WTC11 (cell line): ENCODE measurements at regions of chr1 and their contacts with region 1.

Region 1: GRCh38 chr1:151340870-151341754 is 5.9 kb downstream of the RFX5 start:
- DNase-seq: peak; percentile 47
- ATAC-seq: peak; percentile 88
- H3K4me3 Mint-ChIP-seq: no peak overlapping the region
- H3K27ac Mint-ChIP-seq: peak overlapping the region; percentile 58
- H3K4me1 Mint-ChIP-seq: peaks cover 5% of the 10 kb centered on the region
- H3K27me3 Mint-ChIP-seq: no peaks in the 10 kb centered on the region
- CTCF ChIP-seq: peak; percentile 50; the same call in 1 of the 2 replicates

Region 2: DNA sequence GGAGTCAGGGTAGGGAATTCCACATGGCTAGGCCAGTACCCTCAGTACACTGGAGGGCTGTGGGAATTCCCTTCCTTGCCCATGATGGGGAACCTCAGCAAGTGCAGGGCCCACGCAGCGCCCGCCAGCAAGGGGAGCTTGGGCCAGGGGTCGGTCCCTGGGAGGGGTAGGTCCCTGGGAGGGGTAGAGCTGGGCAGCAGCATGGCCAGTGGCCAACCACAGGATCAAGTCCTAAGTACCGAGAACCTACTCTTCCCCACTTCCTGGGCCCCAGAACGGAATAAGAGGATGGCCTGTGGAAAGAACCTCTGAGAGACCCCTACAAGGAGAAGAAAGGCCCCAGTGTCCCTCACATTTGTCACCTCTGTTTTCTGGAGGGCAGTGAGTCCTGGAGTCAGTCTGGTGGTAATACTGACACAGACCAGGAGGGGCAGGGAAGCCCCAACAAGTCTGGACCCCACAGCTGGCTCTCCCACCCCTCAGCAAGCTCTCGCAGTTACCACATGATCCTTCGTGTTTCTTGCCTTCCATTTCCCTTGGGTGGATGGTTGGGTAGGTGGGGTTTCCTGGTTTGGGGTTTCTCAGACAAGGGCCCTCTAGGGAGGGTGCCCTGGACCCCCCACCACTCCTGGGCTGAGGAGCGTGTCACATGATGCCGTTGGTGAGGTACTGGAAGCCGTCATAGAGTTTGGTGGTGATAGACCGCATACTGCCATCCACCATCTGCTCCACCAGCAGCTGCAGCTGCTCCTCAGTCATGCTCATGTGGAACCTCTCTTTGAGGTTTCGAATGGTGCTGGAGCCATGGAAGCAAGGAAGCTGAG is 48.7 kb before region 1 on chr1:
- CTCF ChIA-PET with region 1: interaction called, 36 read pairs
- POLR2A ChIA-PET with region 1: no interaction called
- DNase-seq: no peak
- ATAC-seq: peak; percentile 43
- H3K4me3 Mint-ChIP-seq: no peak overlapping the region
- H3K27ac Mint-ChIP-seq: no peak overlapping the region; the same call in 1 of the 2 replicates
- H3K4me1 Mint-ChIP-seq: peaks cover 30% of the 10 kb centered on the region
- H3K27me3 Mint-ChIP-seq: no peaks in the 10 kb centered on the region
- CTCF ChIP-seq: no peak

Region 3: GRCh38 chr1:151327223-151327902 is 13.7 kb before region 1 on chr1 and contains the start of gene PI4KB:
- CTCF ChIA-PET with region 1: interaction called, 48 read pairs
- POLR2A ChIA-PET with region 1: interaction called, 12 read pairs
- DNase-seq: peak; percentile 92
- ATAC-seq: peak; percentile 96
- H3K4me3 Mint-ChIP-seq: peak within 1 kb of the TSS; percentile 87
- H3K27ac Mint-ChIP-seq: peak within 1 kb of the TSS; percentile 98
- H3K4me1 Mint-ChIP-seq: peaks cover 13% of the 10 kb centered on the region
- H3K27me3 Mint-ChIP-seq: no peaks in the 10 kb centered on the region
- CTCF ChIP-seq: no peak
- total RNA-seq, gene PI4KB: 25.6 to 33.6 TPM (median 30.5 TPM) in 3 replicates

Region 4: DNA sequence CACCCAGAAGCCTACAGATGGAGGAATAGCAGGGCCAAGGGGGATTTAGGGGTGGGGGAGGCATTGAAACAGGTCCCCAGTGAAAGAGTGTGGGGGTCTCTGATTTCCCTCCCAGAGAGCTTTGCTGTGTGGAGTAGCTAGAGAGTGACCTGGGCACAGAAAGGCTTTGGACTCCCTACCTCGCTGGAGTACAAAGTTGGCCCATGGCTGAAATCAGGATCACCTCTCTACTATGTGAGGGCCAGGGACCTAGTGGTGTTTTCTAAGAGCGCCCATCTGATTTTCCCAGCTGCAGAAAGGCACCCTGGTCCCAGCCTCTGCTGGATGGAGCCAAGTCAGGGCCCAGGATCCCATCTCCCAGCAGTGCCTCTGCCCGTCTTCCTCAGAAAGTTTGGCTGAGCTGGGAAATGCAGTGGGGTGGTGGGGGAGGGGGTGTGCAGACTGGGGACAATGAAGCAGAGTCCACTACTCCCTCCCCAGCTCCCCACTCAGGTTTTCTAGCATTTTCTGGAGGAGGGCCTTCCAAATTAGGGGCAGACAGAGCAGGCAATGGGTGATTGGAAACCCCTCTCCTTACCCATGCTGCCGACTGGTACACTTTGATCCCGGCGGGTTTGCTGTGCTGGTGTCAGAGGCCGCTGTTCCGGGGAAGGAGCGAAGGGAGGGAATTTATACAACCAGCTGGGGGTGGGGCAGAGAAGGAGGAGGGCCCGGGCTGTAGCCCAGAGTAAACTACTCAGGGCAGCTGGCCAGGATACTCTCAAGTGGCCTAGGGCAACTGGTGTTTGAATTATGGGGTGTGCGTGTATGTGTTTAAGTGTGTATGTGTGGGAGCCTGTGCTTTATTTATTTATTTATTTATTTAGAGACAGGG is 31.2 kb after region 1 on chr1 and contains the start of gene SELENBP1:
- CTCF ChIA-PET with region 1: interaction called, 15 read pairs
- POLR2A ChIA-PET with region 1: no interaction called
- DNase-seq: peak; percentile 63
- ATAC-seq: peak; percentile 86
- H3K4me3 Mint-ChIP-seq: peak within 1 kb of the TSS; percentile 60
- H3K27ac Mint-ChIP-seq: peak within 1 kb of the TSS; percentile 12; the same call in 1 of the 2 replicates
- H3K4me1 Mint-ChIP-seq: peaks cover 24% of the 10 kb centered on the region
- H3K27me3 Mint-ChIP-seq: no peaks in the 10 kb centered on the region
- CTCF ChIP-seq: no peak
- total RNA-seq, gene SELENBP1: 17.9 to 23.9 TPM (median 20.2 TPM) in 3 replicates

Region 5: GRCh38 chr1:151611832-151612500 is 270.9 kb after region 1 on chr1 and contains the start of gene SNX27:
- CTCF ChIA-PET with region 1: no interaction called
- POLR2A ChIA-PET with region 1: no interaction called
- DNase-seq: peak; percentile 96
- ATAC-seq: peak; percentile 92
- H3K4me3 Mint-ChIP-seq: peak within 1 kb of the TSS; percentile 93
- H3K27ac Mint-ChIP-seq: peak within 1 kb of the TSS; percentile 83
- H3K4me1 Mint-ChIP-seq: peaks cover 22% of the 10 kb centered on the region
- H3K27me3 Mint-ChIP-seq: peaks cover 3% of the 10 kb centered on the region; the same call in 1 of the 2 replicates
- CTCF ChIP-seq: no peak
- total RNA-seq, gene SNX27: 50.0 to 56.0 TPM (median 50.3 TPM) in 3 replicates

Region 6: DNA sequence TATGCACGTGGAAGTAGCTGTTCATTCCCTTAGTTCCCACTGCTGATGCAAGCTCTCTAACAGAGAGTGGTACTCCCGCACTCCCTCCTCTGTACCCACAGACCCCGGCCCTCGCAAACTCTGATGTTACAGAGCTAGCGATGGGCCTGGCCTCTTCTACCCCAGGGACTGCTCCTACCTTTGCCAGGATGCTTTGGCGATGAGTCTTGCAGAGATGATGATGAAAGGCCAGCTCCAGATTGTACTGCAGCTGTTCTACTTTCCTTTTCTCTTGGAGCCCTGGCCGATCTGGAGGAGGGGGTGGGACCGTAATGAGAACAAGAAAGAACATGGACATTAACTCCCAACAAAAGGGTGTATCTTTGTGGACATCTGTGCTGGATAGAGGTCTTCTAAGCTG is 470.0 kb after region 1 on chr1:
- CTCF ChIA-PET with region 1: no interaction called
- POLR2A ChIA-PET with region 1: no interaction called
- DNase-seq: no peak
- ATAC-seq: no peak
- H3K4me3 Mint-ChIP-seq: no peak overlapping the region
- H3K27ac Mint-ChIP-seq: no peak overlapping the region
- H3K4me1 Mint-ChIP-seq: peaks cover 14% of the 10 kb centered on the region
- H3K27me3 Mint-ChIP-seq: no peaks in the 10 kb centered on the region; the same call in 1 of the 2 replicates
- CTCF ChIP-seq: no peak